ENCODE measurements at regions of chr15 and their contacts with region 1.

Region 1: DNA sequence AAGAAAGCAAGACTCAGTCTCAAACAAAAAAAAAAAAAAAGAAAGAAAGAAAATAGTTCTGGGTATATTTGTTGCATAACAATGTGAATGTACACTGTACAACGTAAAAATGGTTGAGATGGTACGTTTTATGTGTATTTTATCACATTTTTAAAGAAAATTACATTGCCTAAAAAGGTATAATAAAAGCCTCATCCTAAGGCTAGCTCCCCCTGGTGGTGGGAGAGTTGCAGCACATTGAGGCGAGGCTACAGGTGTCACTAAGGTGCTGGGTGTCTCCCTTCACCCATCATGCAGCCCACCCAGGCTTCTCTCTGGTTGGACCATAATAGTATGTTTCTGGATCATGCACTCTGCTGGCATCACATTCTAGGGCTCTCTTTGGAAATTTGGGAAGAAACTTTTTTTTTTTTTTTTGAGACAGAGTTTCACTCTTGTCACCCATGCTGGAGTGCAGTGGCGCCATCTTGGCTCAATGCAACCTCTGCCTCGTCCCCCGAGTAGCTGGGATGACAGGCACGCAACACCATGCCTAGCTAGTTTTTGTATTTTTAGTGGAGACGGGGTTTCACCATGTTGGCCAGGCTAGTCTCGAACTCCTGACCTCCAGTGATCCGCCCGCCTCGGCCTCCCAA is 12.4 kb upstream of the RAB11A start:
- DNase-seq: peak; percentile 75
- H3K4me3 ChIP-seq: no peak overlapping the region
- H3K27ac ChIP-seq: no peak overlapping the region
- H3K4me1 ChIP-seq: no peaks in the 10 kb centered on the region
- H3K27me3 ChIP-seq: peaks cover 0 to under 1% of the 10 kb centered on the region in 2 donors
- CTCF ChIP-seq: peak; percentile 72 to 77

Region 2: GRCh38 chr15:65641768-65642475 is 215.0 kb before region 1 on chr15:
- intact Hi-C with region 1: loop called (anchors 5 kb)
- DNase-seq: no peak
- H3K4me3 ChIP-seq: no peak overlapping the region
- H3K27ac ChIP-seq: no peak overlapping the region
- H3K4me1 ChIP-seq: peaks cover 0 to 3% (median 0%) of the 10 kb centered on the region in 4 donors
- H3K27me3 ChIP-seq: no peaks in the 10 kb centered on the region
- CTCF ChIP-seq: no peak

Region 3: GRCh38 chr15:65792130-65792987 is 64.6 kb before region 1 on chr15 and contains the start of gene DENND4A:
- intact Hi-C with region 1: loop called (anchors 5 kb)
- DNase-seq: peak; percentile 98 to 99
- H3K4me3 ChIP-seq: peak within 1 kb of the TSS; percentile 93 to 98
- H3K27ac ChIP-seq: peak within 1 kb of the TSS; percentile 97 to 99
- H3K4me1 ChIP-seq: peaks cover 0 to 31% (median 13%) of the 10 kb centered on the region in 4 donors
- H3K27me3 ChIP-seq: no peaks in the 10 kb centered on the region
- CTCF ChIP-seq: no peak